ENCODE measurements at regions of chr1 and their contacts with region 1.

Region 1: GRCh38 chr1:147545133-147545532 is 3.8 kb downstream of the BCL9 start:
- DNase-seq: no peak
- ATAC-seq: no peak
- H3K4me3 ChIP-seq: no peak overlapping the region
- H3K27ac ChIP-seq: no peak overlapping the region
- H3K4me1 ChIP-seq: peaks cover 0 to 61% (median 17%) of the 10 kb centered on the region in 9 donors
- H3K27me3 ChIP-seq: peaks cover 0 to 18% (median 0%) of the 10 kb centered on the region in 7 donors
- CTCF ChIP-seq: no peak

Region 2: DNA sequence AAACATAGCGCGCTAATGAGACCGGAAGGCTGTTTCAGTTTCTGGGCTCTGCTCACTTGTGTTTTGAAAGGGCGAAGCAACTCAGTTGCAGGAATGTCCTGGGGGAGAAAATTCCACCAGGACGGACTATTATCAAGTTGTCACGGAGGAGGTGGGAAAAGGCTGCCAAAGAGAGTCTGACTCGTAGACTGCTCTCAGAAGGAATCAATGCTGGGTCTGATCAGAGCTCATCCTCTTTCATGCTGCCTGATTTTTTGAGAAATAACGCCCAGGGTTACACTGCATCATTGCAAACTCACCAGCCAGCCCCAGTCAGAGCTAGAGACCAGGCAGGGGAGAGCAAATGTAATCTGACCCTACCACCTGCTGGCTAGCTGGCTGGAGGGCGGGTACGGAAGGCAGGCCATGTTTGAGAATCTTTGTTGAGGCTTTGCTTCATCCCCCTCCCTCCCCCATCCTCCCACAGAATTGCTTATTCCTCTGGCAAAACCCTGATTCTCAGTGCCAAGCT is 40.3 kb before region 1 on chr1:
- intact Hi-C with region 1: no loop called
- DNase-seq: peak in 1 of 2 donors; percentile 29
- ATAC-seq: peak; percentile 25 to 80 (median 66)
- H3K4me3 ChIP-seq: peak overlapping the region in 5 of 10 donors; percentile 4 to 26 (median 8)
- H3K27ac ChIP-seq: peak overlapping the region in 6 of 10 donors; percentile 54 to 70 (median 66)
- H3K4me1 ChIP-seq: peaks cover 0 to 24% (median 6%) of the 10 kb centered on the region in 9 donors
- H3K27me3 ChIP-seq: no peaks in the 10 kb centered on the region
- CTCF ChIP-seq: no peak

Region 3: GRCh38 chr1:147599362-147600118 is 54.4 kb after region 1 on chr1:
- intact Hi-C with region 1: loop called (anchors 1 to 10 kb)
- DNase-seq: peak; percentile 97 to 99
- ATAC-seq: peak; percentile 93 to 98 (median 95)
- H3K4me3 ChIP-seq: peak overlapping the region; percentile 60 to 94 (median 85)
- H3K27ac ChIP-seq: peak overlapping the region; percentile 79 to 96 (median 90)
- H3K4me1 ChIP-seq: peaks cover 5 to 42% (median 17%) of the 10 kb centered on the region in 9 donors
- H3K27me3 ChIP-seq: peaks cover 0 to 18% (median 0%) of the 10 kb centered on the region in 7 donors
- CTCF ChIP-seq: no peak

Measured in heart right ventricle (tissue), 16 donors.